HAP-1 (cell line): ENCODE measurements at regions of chr15 and their contacts with region 1.

Region 1: DNA sequence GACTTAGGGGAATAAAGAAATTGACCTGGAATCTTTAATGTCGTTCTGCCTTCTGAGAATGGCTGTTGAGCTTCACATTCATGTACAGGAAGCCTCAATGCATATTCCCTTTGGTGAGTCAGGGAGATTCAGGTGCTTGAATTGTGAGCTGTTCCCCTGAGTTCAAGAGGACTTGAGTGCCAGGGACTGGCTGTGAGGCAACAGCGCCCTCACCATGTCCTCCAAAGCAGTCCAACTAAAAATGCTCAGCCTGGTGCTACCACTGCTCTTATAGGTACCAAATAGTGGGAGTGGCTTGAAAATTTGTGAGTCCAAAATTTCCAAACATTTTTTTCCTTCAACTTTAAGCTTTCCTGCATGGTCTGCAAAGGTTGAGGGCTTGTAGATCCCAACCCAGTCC is 54.1 kb downstream of the LEO1 start:
- DNase-seq: peak; percentile 19 to 47
- H3K4me3 ChIP-seq: no peak overlapping the region
- H3K4me1 ChIP-seq: no peaks in the 10 kb centered on the region
- H3K27me3 ChIP-seq: no peaks in the 10 kb centered on the region

Region 2: DNA sequence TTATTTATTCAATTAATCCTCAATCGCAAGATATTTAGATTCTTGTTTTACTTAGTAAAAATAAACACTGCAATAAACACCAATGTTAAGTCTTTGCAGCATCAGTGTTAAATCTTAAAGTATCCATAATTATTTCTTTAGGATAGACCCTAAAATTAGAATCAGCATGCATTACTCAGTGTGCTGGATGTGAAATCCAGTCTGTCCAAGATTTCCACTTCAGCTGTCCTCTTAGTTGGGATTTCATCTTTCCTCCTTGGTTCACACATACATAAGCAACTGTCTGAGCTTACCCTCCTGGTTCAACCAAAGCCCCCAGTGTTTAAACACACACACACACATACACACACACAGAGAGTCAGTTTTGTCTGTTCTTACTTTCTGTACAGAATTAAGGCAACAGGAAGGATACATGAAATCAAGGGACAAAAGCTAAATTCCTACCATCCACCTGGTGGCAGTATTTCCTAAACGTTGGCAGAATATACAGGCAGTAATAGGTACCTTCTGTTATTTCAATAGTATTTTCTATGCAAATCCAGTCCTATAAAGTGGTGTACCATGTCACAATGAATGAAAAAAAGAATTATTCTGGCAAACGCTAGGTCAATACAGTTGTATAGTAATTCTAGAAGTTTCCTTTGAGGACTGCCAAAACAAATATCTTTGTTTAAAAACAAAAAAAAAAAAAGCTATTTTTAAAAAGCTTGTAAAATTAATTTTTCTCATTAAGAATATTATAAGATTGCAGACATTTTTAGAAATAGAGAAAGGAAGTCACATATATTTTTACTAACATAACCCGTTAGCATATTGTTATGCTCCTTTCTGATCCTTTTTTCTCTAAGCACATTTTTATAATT is 267.6 kb before region 1 on chr15:
- in situ Hi-C with region 1: loop called (anchors 25 kb)
- DNase-seq: peak; percentile 57 to 87
- H3K4me3 ChIP-seq: no peak overlapping the region
- H3K4me1 ChIP-seq: peaks cover 6% of the 10 kb centered on the region
- H3K27me3 ChIP-seq: peaks cover 15% of the 10 kb centered on the region

Region 3: DNA sequence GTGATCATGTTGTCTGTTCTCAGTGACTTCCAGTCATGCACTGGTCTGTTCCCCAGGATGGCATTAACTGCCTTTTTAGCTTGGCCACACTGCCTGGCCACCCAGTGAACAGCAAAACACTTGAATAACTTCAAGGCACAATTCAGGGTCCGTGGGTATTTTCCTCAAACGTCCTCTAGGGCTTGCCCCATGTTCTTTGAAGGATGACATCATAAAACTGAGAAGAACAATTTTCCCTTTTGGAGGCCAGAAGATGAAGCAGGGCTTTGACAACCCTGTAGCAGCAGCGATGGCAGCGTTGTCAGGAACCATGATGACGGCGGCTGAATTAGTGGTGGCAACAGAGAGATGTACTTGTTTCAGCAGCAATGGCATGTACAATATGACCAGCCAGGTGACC is 1338.6 kb after region 1 on chr15:
- in situ Hi-C with region 1: no loop called
- DNase-seq: no peak
- H3K4me3 ChIP-seq: no peak overlapping the region
- H3K4me1 ChIP-seq: no peaks in the 10 kb centered on the region
- H3K27me3 ChIP-seq: no peaks in the 10 kb centered on the region